ENCODE measurements at regions of chr11 and their contacts with region 1.

Region 1: DNA sequence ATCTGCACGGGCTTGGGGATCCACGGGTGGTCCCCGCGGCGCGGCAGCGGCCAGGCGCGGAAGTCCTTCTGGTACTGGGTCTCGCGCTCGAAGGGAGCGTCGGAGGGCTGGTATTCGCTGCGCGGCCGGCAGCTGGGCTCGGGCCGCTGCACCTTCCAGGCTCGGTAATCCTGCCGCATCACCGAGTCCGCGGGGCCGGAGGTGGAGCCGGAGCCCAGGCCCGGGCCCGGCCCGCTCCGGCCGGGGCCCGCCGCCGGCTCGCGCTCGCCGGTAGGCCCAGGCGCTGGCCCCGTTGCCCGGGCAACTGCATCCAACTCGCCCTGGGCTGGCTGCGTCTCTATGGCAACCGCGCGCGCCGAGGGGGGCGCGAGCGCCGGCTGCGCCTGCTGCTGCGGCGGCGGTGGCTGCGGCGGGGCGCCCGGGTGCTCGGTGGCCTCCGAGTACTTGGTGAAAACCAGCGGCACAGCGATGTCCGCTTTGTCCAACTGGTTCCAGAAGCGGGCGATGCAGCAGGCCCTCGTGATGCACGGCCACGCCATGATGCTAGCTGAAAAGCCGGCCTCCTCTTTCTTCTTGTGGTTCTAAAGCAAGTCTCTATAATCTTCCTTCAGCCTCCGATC is 897 bp downstream of the MAP6 start:
- DNase-seq: peak; percentile 35
- ATAC-seq: peak; percentile 78
- H3K4me3 ChIP-seq: peak overlapping the region; percentile 44
- H3K27ac ChIP-seq: no peak overlapping the region
- H3K4me1 ChIP-seq: no peaks in the 10 kb centered on the region; the same call in 1 of the 2 replicates
- H3K27me3 ChIP-seq: peaks cover 42% of the 10 kb centered on the region
- CTCF ChIP-seq: no peak
- POLR2A ChIP-seq: no peak
- RAD21 ChIP-seq: no peak

Region 2: DNA sequence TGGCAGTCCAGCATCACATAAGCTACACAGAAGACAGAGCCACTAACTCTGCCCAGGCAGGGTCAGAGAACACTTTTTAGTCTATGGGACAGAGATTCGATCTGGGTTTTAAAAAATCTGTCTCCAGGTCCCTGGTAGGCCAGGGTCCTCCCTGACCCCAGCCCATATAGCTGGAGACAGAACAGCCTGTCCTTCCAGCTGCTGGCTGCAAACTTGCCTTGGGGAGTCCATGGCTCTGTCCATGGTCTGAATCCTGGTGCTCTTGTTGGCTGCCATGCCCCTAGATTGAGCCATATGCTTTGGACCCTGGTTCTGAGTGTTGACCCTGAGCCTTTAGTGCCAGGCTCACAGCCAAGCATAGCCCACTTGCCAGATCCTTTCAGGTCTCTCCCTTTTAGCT is 1161.1 kb before region 1 on chr11:
- CTCF ChIA-PET with region 1: no interaction called
- POLR2A ChIA-PET with region 1: interaction called, 16 read pairs
- dilution Hi-C with region 1: no loop called
- in situ Hi-C with region 1: no loop called
- intact Hi-C with region 1: no loop called
- DNase-seq: no peak
- ATAC-seq: no peak
- H3K4me3 ChIP-seq: no peak overlapping the region
- H3K27ac ChIP-seq: no peak overlapping the region
- H3K4me1 ChIP-seq: peaks cover 2% of the 10 kb centered on the region; the same call in 1 of the 2 replicates
- H3K27me3 ChIP-seq: peaks cover 16% of the 10 kb centered on the region
- CTCF ChIP-seq: no peak
- POLR2A ChIP-seq: no peak
- RAD21 ChIP-seq: no peak

Region 3: GRCh38 chr11:75582895-75583717 is 84.8 kb before region 1 on chr11:
- CTCF ChIA-PET with region 1: no interaction called
- POLR2A ChIA-PET with region 1: no interaction called
- dilution Hi-C with region 1: no loop called
- in situ Hi-C with region 1: no loop called
- intact Hi-C with region 1: loop called (anchors 5 kb)
- DNase-seq: peak; percentile 66
- ATAC-seq: peak; percentile 94
- H3K4me3 ChIP-seq: peak overlapping the region; percentile 65
- H3K27ac ChIP-seq: peak overlapping the region; percentile 95
- H3K4me1 ChIP-seq: peaks cover 8% of the 10 kb centered on the region
- H3K27me3 ChIP-seq: no peaks in the 10 kb centered on the region
- CTCF ChIP-seq: 0 out of 2 replicates have a peak, but pooled peaks have one; percentile 9
- POLR2A ChIP-seq: 0 out of 2 replicates have a peak, but pooled peaks have one; percentile 53
- RAD21 ChIP-seq: no peak

Region 4: DNA sequence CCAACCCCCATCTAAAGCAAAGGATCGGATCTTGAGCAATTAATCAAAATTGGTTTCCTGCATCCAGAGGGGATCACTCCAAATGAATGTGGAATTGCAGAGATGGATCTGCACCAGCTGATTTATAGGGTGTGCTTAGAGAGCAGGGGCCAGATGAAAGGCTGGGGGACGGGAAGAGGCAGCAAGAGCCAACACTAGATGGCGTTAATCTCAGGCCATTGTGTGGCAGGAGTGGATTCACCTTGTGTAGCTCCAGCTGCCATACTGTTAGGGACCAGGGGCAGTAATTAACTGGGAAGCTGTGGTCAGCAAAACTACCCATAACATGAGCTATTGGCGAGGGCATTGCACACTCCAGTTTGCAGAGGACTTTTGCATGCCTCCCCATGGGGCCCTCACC is 70.3 kb before region 1 on chr11:
- CTCF ChIA-PET with region 1: no interaction called
- POLR2A ChIA-PET with region 1: no interaction called
- dilution Hi-C with region 1: no loop called
- in situ Hi-C with region 1: no loop called
- intact Hi-C with region 1: no loop called
- DNase-seq: no peak
- ATAC-seq: 0 out of 2 replicates have a peak, but pooled peaks have one; percentile 13
- H3K4me3 ChIP-seq: no peak overlapping the region
- H3K27ac ChIP-seq: no peak overlapping the region
- H3K4me1 ChIP-seq: peaks cover 5% of the 10 kb centered on the region
- H3K27me3 ChIP-seq: peaks cover 8% of the 10 kb centered on the region
- CTCF ChIP-seq: peak; percentile 35
- POLR2A ChIP-seq: no peak
- RAD21 ChIP-seq: peak; percentile 45

Measured in IMR-90 (cell line).